AG04450 (cell line): ENCODE measurements at regions of chr17 and their contacts with region 1.

Region 1: DNA sequence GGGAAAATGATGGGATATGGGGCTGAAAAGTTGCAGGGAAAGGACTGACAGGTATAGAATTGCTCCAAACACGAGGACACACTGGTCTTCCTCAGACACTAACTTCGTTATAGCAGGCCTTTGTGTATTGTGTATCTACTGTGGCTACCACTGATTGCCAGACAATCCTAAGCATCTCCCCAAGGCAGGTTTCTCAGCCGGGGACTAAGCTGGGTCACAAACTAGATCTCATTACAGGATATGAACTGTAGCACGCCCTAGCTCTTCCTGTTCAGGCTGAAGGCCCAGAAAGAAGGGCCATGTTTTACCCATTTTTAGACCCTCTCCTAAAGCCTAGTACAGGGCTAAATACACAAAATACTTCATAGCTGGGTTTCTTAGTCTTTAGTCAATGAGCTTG is 5.1 kb upstream of the RANGRF start:
- DNase-seq: no peak
- H3K4me3 ChIP-seq: no peak overlapping the region
- H3K27ac ChIP-seq: no peak overlapping the region
- H3K27me3 ChIP-seq: no peaks in the 10 kb centered on the region
- CTCF ChIP-seq: no peak

Region 2: GRCh38 chr17:6626616-6627015 is 1656.7 kb before region 1 on chr17:
- CTCF ChIA-PET with region 1: interaction called, 12 read pairs
- POLR2A ChIA-PET with region 1: no interaction called
- DNase-seq: no peak
- H3K4me3 ChIP-seq: no peak overlapping the region
- H3K27ac ChIP-seq: no peak overlapping the region
- H3K27me3 ChIP-seq: no peaks in the 10 kb centered on the region
- CTCF ChIP-seq: no peak

Region 3: DNA sequence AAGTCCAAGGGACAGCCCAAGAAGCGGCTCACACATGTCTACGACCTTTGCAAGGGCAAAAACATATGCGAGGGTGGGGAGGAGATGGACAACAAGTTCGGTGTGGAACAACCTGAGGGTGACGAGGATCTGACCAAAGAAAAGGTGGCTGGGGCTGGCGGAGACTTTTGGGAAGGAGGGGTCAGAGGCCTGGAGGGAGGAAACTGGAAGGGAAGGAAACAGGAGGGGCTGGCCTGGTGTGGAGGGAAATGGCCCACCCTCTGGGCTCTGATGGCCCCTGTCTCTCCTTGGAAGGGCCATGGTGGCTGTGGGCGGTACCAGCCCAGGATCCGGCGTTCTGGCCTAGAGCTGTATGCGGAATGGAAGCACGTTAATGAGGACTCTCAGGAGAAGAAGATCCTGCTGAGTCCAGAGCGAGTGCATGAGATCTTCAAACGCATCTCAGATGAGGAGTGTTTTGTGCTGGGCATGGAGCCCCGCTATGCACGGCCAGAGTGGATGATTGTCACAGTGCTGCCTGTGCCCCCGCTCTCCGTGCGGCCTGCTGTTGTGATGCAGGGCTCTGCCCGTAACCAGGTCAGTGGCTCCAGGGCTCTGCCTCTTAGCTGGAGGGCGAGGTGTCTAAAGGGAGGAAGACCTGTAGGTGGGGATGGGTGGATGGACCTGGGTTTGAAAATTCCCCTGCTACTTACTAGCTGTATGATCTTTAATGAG is 786.7 kb before region 1 on chr17:
- CTCF ChIA-PET with region 1: no interaction called
- POLR2A ChIA-PET with region 1: no interaction called
- DNase-seq: no peak
- H3K4me3 ChIP-seq: no peak overlapping the region
- H3K27ac ChIP-seq: no peak overlapping the region
- H3K27me3 ChIP-seq: no peaks in the 10 kb centered on the region
- CTCF ChIP-seq: no peak